ENCODE measurements at regions of chrX and their contacts with region 1.

Region 1: GRCh38 chrX:13669246-13669737 is 16.4 kb downstream of the TCEANC start:
- DNase-seq: peak; percentile 89
- ATAC-seq: peak; percentile 77
- H3K4me3 ChIP-seq: peak overlapping the region; percentile 44; the same call in 1 of the 2 replicates
- H3K27ac ChIP-seq: peak overlapping the region; percentile 92
- H3K4me1 ChIP-seq: peaks cover 37% of the 10 kb centered on the region
- H3K27me3 ChIP-seq: no peaks in the 10 kb centered on the region
- CTCF ChIP-seq: no peak
- EP300 ChIP-seq: peak; percentile 91 to 92
- POLR2A ChIP-seq: no peak
- RAD21 ChIP-seq: 0 out of 2 replicates have a peak, but pooled peaks have one; percentile 15

Region 2: GRCh38 chrX:13688958-13689740 is 19.9 kb after region 1 on chrX and contains the start of gene RAB9A:
- CTCF ChIA-PET with region 1: interaction called, 23 read pairs
- POLR2A ChIA-PET with region 1: interaction called, 49 read pairs
- RAD21 ChIA-PET with region 1: interaction called, 103 read pairs
- SMC1A ChIA-PET with region 1: interaction called, 136 read pairs
- in situ Hi-C with region 1: no loop called
- intact Hi-C with region 1: loop called (anchors 1 kb)
- DNase-seq: no peak
- ATAC-seq: peak; percentile 77
- H3K4me3 ChIP-seq: peak within 1 kb of the TSS; percentile 84
- H3K27ac ChIP-seq: peak within 1 kb of the TSS; percentile 91
- H3K4me1 ChIP-seq: peaks cover 16% of the 10 kb centered on the region
- H3K27me3 ChIP-seq: no peaks in the 10 kb centered on the region
- CTCF ChIP-seq: no peak
- EP300 ChIP-seq: peak in 1 of 2 experiments; percentile 18; a peak in 1 of 4 replicates
- POLR2A ChIP-seq: peak; percentile 86
- RAD21 ChIP-seq: no peak
- polyA plus RNA-seq, gene RAB9A: 49.2 to 49.3 TPM

Region 3: DNA sequence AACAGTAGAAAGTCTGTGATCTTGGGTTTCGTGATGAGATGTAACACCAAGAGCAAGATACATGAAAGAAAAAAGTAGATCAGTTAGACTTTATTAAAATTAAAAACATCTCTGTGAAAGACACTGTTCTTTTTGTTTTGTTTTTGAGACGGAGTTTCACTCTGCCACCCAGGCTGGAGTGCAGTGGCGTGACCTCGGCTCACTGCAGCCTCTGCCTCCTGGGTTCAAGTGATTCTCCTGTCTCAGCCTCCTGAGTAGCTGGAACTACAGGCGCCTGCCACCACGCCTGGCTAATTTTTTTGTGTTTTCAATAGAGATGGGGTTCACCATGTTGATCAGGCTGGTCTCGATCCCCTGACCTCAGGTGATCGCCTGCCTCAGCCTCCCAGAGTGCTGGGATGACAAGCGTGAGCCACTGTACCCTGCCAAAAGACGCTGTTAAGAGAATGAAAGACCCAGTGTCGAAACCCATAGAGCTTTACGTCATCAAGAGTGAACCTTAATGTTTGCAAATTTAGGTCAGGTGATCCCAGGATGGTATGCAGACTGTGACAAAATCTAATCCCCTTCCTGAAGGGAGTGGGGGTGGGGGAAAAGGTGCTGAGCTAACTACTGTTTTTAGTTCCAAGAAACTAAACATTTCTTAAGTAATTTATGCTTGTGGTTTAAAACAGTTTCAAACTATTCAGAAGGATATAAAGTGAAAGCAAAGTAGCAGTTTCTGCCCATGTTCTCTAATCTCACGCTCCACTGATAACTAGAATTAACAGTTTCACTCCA is 73.3 kb after region 1 on chrX:
- CTCF ChIA-PET with region 1: interaction called, 3 read pairs
- POLR2A ChIA-PET with region 1: interaction called, 6 read pairs
- RAD21 ChIA-PET with region 1: interaction called, 20 read pairs
- SMC1A ChIA-PET with region 1: interaction called, 25 read pairs
- in situ Hi-C with region 1: no loop called
- intact Hi-C with region 1: no loop called
- DNase-seq: peak; percentile 91
- ATAC-seq: peak; percentile 92
- H3K4me3 ChIP-seq: peak overlapping the region; percentile 19; the same call in 1 of the 2 replicates
- H3K27ac ChIP-seq: peak overlapping the region; percentile 62; the same call in 1 of the 2 replicates
- H3K4me1 ChIP-seq: peaks cover 23% of the 10 kb centered on the region
- H3K27me3 ChIP-seq: no peaks in the 10 kb centered on the region
- CTCF ChIP-seq: no peak
- EP300 ChIP-seq: peak; percentile 65 to 74
- POLR2A ChIP-seq: no peak
- RAD21 ChIP-seq: no peak

Region 4: DNA sequence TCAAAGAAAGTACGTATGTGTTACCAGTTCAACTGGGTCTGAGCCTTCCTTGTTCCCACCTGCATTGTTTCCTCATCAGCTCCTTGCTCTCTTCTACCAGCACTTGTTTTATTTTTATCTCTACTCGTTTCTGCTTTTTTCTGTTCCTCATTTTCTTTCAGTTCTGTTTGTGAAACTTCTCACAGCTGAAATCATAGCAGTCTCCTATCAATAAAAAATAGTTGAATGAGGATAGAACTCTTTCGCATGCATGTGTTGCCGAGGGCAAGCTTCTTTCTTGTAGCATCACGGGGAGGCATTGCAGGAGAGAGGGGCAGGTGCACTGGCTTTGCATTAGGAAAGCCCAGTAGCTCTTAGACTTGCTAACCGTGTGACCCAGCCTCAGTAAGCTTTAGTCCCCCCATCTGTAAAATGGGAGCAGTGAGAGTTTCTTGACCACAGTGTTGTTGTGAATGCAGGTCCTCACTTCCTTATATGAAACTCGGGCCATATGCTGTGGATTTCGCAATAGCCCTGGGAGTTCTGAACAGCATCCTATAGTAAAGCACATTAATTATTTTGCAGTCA is 89.9 kb after region 1 on chrX:
- CTCF ChIA-PET with region 1: interaction called, 4 read pairs
- POLR2A ChIA-PET with region 1: interaction called, 4 read pairs
- RAD21 ChIA-PET with region 1: interaction called, 17 read pairs
- SMC1A ChIA-PET with region 1: interaction called, 14 read pairs
- in situ Hi-C with region 1: no loop called
- intact Hi-C with region 1: no loop called
- DNase-seq: peak; percentile 70
- ATAC-seq: peak; percentile 72
- H3K4me3 ChIP-seq: peak overlapping the region; percentile 3; the same call in 1 of the 2 replicates
- H3K27ac ChIP-seq: peak overlapping the region; percentile 79
- H3K4me1 ChIP-seq: peaks cover 36% of the 10 kb centered on the region
- H3K27me3 ChIP-seq: no peaks in the 10 kb centered on the region
- CTCF ChIP-seq: no peak
- EP300 ChIP-seq: peak; percentile 62 to 77; a peak in 3 of 4 replicates
- POLR2A ChIP-seq: no peak
- RAD21 ChIP-seq: no peak

Region 5: GRCh38 chrX:13764765-13765164 is 95.5 kb after region 1 on chrX:
- CTCF ChIA-PET with region 1: no interaction called
- POLR2A ChIA-PET with region 1: interaction called, 4 read pairs
- RAD21 ChIA-PET with region 1: interaction called, 17 read pairs
- SMC1A ChIA-PET with region 1: interaction called, 14 read pairs
- in situ Hi-C with region 1: no loop called
- intact Hi-C with region 1: no loop called
- DNase-seq: no peak
- ATAC-seq: no peak
- H3K4me3 ChIP-seq: no peak overlapping the region
- H3K27ac ChIP-seq: no peak overlapping the region
- H3K4me1 ChIP-seq: peaks cover 14% of the 10 kb centered on the region
- H3K27me3 ChIP-seq: no peaks in the 10 kb centered on the region
- CTCF ChIP-seq: no peak
- EP300 ChIP-seq: no peak
- POLR2A ChIP-seq: no peak
- RAD21 ChIP-seq: no peak

Measured in GM12878 (cell line).